Heart left ventricle (tissue), 16 donors: ENCODE measurements at regions of chr14 and their contacts with region 1.

Region 1: DNA sequence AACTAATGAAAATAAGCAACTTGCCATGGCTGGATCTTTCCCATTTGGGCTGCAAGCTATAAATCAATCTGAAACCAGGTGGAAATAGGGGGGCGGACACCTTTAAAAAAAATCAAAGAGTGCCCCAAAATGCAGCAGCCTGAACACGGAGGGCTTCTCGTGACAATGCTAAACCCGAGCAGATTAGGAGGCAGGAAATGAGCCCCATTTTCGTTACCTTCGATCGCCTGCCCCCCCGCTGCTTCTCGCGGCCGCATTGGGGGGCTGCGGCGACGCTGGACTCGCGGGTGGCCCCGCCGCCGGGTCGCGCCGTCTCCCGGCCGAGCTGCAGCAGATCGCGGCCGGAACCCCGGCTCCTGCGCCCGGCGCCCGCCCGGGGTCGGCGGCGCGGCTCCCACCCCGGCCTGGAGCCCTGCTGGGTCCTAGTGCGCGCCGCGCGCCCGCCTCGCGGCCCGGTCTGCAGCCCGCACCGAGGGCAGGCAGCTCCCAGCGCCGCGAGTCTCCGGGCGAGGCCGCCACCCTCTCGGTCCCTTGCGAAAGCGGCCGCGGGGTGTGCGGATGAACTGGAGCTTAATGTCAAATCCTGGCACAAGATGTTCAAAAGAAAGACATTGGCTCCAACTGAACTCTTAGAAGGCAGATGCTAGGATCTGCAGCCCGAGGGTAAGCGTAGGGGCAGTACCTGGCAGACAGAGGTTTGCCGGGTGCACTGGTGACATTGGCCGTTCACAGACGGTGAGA is 201.9 kb upstream of the FOXN3 start:
- DNase-seq: peak; percentile 72 to 90 (median 78)
- ATAC-seq: peak; percentile 81 to 97 (median 89)
- H3K4me3 ChIP-seq: peak overlapping the region; percentile 55 to 91 (median 80)
- H3K27ac ChIP-seq: peak overlapping the region; percentile 52 to 87 (median 82)
- H3K4me1 ChIP-seq: peaks cover 0 to 62% (median 33%) of the 10 kb centered on the region in 12 donors
- H3K27me3 ChIP-seq: no peaks in the 10 kb centered on the region
- CTCF ChIP-seq: peak in 2 of 12 donors; percentile 11 to 16
- POLR2A ChIP-seq: peak in 1 of 2 donors; percentile 51

Region 2: DNA sequence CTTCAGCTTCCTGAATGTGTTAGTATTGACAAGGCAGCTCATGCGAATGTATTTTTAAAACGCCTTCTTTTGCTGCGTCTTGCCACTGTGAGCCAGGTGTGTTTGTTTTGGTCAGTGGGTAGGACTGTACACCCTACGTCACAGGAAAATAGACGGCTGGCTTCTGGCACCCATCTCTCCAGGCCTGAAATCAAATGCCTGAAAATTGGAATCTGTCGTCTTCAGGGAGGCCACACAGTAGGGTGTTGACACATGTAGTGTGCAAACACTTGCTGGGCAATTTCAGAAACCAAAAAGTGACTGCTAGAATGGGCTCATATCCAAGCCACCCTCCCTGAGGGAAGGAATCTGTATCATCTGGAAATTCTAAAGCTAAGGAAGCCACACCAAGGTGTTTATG is 585.2 kb before region 1 on chr14:
- intact Hi-C with region 1: loop called in 1 of 10 experiments (anchors 5 kb)
- DNase-seq: no peak
- ATAC-seq: no peak
- H3K4me3 ChIP-seq: no peak overlapping the region
- H3K27ac ChIP-seq: no peak overlapping the region
- H3K4me1 ChIP-seq: no peaks in the 10 kb centered on the region
- H3K27me3 ChIP-seq: peaks cover 0 to 21% (median 0%) of the 10 kb centered on the region in 9 donors
- CTCF ChIP-seq: no peak
- POLR2A ChIP-seq: no peak

Region 3: DNA sequence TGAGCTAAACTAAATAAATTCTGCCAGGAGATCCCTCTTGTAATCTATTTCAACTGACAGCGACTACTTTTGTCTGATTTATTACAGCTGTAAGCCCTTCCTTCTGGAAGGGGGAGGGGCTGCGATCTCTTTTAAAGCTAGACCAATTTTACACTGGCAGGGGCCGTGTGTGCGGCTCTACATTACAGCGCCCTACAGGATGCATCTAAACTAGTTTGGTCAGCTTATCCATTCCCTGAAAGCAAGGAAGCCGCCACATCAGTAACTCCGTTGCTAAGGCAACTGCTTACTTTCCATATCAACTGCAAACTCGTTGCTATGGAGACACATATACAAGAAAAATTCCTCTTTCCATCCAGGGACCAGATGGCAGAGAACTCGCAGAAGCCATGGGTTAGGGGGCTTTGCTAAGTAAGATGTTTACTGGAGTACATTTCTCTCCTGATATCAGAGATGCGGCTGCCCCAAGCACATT is 219.3 kb before region 1 on chr14:
- intact Hi-C with region 1: loop called in 1 of 10 experiments (anchors 10 kb)
- DNase-seq: no peak
- ATAC-seq: peak in 3 of 4 donors; percentile 58 to 63 (median 59)
- H3K4me3 ChIP-seq: peak overlapping the region in 6 of 12 donors; percentile 10 to 42 (median 14)
- H3K27ac ChIP-seq: peak overlapping the region in 4 of 12 donors; percentile 4 to 53 (median 10)
- H3K4me1 ChIP-seq: peaks cover 3 to 54% (median 32%) of the 10 kb centered on the region in 12 donors
- H3K27me3 ChIP-seq: no peaks in the 10 kb centered on the region
- CTCF ChIP-seq: no peak
- POLR2A ChIP-seq: no peak

Region 4: DNA sequence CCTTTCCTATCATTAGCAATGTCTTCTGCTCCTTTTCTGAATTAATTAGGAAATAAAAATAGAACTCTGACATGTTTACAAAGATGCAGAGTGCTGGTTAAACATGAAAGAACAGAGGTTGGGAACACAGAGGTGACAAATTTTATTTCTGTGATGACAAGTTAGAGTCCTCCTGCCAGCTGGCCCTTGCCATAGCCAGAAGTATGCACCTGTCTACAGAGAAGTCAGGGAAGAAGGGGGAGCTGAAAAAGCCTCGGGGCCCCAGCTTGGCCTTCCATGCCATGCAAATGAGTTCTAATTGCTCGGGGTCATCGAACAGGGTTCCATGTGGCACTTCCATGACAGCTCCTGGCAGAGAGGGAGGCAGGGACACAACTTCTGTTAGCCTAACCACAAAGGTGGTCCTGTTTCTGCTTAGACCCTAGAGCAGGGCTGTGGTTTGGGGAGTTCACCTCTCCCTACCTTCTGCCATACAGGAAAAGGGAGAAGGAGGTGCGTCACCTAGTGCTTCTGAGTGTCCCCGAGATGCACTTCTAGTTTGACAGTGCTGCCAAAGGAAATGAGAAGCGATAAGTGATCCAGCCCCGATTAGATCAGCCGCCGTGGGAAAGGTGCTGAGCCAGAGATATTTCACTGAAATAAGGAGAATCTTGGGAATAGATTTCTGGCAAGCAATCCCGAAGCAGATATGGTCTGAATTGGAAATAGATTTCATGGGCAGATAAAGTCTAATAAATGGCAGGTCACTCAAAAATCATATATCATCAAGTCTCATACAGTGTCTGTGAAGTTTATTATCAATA is 46.2 kb before region 1 on chr14:
- intact Hi-C with region 1: loop called in 2 of 10 experiments (anchors 5 kb)
- DNase-seq: no peak
- ATAC-seq: peak; percentile 35 to 64 (median 54)
- H3K4me3 ChIP-seq: no peak overlapping the region
- H3K27ac ChIP-seq: peak overlapping the region in 9 of 12 donors; percentile 27 to 63 (median 52)
- H3K4me1 ChIP-seq: peaks cover 9 to 66% (median 32%) of the 10 kb centered on the region in 12 donors
- H3K27me3 ChIP-seq: no peaks in the 10 kb centered on the region
- CTCF ChIP-seq: no peak
- POLR2A ChIP-seq: no peak

Region 5: DNA sequence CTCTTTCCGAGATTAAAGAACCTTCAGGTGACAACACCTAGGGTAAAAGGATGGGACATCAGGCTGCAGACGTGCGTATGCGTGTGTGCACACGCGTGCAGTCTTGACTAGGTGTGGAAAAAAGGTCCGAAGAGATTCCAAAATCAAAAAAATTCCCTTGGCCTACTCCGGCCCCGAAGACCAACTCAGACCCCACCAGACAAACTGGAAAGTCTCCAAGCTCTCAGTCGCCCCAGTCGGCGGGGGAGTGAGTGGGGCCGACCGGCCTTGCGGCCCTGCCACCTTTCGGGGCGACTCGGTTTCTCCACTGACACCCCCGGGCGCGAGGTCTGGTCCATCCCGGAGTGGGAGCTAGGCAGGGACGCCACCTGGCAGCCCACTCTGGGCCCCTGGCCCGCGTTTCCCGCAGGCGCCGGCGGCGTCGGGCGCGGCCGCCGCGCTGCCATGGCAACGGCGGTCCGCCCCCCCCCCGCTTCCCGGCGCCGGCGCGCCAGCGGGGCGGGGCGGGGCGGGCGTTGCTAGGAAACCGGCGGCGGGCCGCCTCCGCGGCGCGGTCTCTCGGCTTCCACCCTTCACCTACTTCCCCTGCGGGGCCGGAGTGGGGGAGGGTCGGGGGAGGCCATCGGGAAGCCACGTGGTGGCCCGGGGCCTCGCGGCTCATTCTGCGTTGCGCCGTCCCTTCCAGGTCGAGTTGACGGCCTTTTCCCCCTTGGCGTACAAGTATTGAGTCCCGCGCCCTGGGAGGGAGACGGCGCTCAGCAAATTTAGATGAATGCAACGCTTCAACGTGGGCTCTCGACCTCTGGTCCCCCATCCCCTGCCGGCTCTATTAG is 82.4 kb after region 1 on chr14:
- intact Hi-C with region 1: loop called in 4 of 10 experiments (anchors 5 kb)
- DNase-seq: peak; percentile 91 to 97 (median 92)
- ATAC-seq: peak; percentile 89 to 97 (median 95)
- H3K4me3 ChIP-seq: peak overlapping the region; percentile 54 to 77 (median 66)
- H3K27ac ChIP-seq: peak overlapping the region; percentile 48 to 92 (median 78)
- H3K4me1 ChIP-seq: peaks cover 0 to 20% (median 12%) of the 10 kb centered on the region in 12 donors
- H3K27me3 ChIP-seq: no peaks in the 10 kb centered on the region
- CTCF ChIP-seq: no peak
- POLR2A ChIP-seq: peak in 1 of 2 donors; percentile 12